Transverse colon (tissue), 4 donors: ENCODE measurements at regions of chr14 and their contacts with region 1.

Region 1: DNA sequence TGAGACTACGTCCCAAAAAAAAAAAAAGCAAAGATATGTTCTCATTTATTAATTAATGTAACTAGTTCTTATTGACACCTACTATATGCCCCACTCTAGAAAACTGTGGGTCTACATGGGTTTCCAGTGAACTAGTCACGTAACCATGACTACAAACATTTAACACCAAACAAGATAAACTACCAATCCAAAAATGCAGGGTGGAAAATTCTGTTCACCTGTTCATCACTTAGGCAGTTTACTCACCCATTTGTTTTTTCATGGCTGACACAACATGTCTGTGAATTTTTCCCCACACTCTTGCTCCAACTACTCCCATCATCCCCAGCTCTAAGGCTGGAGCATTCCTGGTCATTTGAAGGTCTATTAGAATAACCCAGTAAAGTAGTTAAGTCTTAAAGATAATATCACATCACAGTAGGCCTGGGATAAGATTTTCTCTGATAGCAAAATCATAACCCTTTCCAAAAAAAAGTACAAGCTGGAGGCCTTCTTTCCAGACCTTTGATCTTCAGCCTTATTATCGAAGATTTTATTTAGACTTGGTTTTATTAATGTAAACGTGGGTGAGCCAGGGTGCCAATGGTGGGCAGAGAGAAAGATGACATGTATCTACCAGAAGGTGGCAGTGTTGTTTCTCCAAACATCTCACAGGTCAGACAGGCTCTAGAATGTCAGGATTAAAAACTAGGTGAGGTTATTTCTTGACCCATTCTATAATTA is 61.6 kb upstream of the DAAM1 start:
- DNase-seq: no peak
- H3K4me3 ChIP-seq: no peak overlapping the region
- H3K27ac ChIP-seq: no peak overlapping the region
- H3K4me1 ChIP-seq: no peaks in the 10 kb centered on the region
- H3K27me3 ChIP-seq: no peaks in the 10 kb centered on the region
- CTCF ChIP-seq: peak; percentile 73 to 89 (median 84)
- EP300 ChIP-seq: no peak
- POLR2A ChIP-seq: no peak

Region 2: GRCh38 chr14:59081720-59082119 is 45.2 kb before region 1 on chr14:
- in situ Hi-C with region 1: no loop called
- intact Hi-C with region 1: no loop called
- DNase-seq: no peak
- H3K4me3 ChIP-seq: no peak overlapping the region
- H3K27ac ChIP-seq: no peak overlapping the region
- H3K4me1 ChIP-seq: no peaks in the 10 kb centered on the region
- H3K27me3 ChIP-seq: no peaks in the 10 kb centered on the region
- CTCF ChIP-seq: no peak
- EP300 ChIP-seq: no peak
- POLR2A ChIP-seq: no peak

Region 3: DNA sequence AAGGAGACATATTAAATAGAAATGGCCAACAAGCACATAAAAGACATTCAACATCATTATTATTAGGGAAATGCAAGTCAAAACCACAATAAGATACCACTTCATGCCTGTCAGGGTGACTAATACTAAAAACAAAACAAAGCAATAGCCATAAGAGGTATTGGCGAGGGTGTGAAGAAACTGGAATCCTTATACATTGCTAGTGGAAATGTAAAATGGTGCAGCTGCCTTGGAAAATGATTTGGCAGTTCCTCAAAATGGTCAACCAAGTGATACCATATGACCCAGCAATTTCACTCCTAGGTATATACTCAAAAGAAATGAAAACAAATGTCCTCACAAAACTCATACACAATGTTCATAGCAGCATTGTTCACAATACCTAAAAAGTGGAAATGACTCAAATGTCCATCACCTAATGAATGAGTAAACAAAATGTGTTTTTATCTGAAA is 311.4 kb after region 1 on chr14:
- in situ Hi-C with region 1: loop called (anchors 5 to 10 kb)
- intact Hi-C with region 1: loop called (anchors 5 kb)
- DNase-seq: no peak
- H3K4me3 ChIP-seq: no peak overlapping the region
- H3K27ac ChIP-seq: no peak overlapping the region
- H3K4me1 ChIP-seq: no peaks in the 10 kb centered on the region
- H3K27me3 ChIP-seq: no peaks in the 10 kb centered on the region
- CTCF ChIP-seq: no peak
- EP300 ChIP-seq: no peak
- POLR2A ChIP-seq: no peak

Region 4: GRCh38 chr14:59454131-59454530 is 327.3 kb after region 1 on chr14:
- in situ Hi-C with region 1: loop called in 1 of 4 experiments (anchors 10 kb)
- intact Hi-C with region 1: no loop called
- DNase-seq: no peak
- H3K4me3 ChIP-seq: no peak overlapping the region
- H3K27ac ChIP-seq: no peak overlapping the region
- H3K4me1 ChIP-seq: no peaks in the 10 kb centered on the region
- H3K27me3 ChIP-seq: no peaks in the 10 kb centered on the region
- CTCF ChIP-seq: no peak
- EP300 ChIP-seq: no peak
- POLR2A ChIP-seq: no peak

Region 5: GRCh38 chr14:59576332-59577294 is 449.7 kb after region 1 on chr14 and contains the start of gene CCDC175:
- in situ Hi-C with region 1: loop called in 2 of 4 experiments (anchors 10 to 25 kb)
- intact Hi-C with region 1: no loop called
- DNase-seq: peak; percentile 92
- H3K4me3 ChIP-seq: peak within 1 kb of the TSS; percentile 31 to 63 (median 46)
- H3K27ac ChIP-seq: peak within 1 kb of the TSS in 3 of 4 donors; percentile 25 to 27 (median 26)
- H3K4me1 ChIP-seq: peaks cover 0 to 11% (median 9%) of the 10 kb centered on the region in 4 donors
- H3K27me3 ChIP-seq: peaks cover 4% of the 10 kb centered on the region
- CTCF ChIP-seq: peak; percentile 63 to 88 (median 72)
- EP300 ChIP-seq: no peak
- POLR2A ChIP-seq: no peak
- total RNA-seq, gene CCDC175: 0.27 to 0.95 TPM in 2 of 4 donors, not detected in the others

Region 6: GRCh38 chr14:59583755-59584154 is 456.9 kb after region 1 on chr14:
- in situ Hi-C with region 1: loop called in 2 of 4 experiments (anchors 10 to 25 kb)
- intact Hi-C with region 1: no loop called
- DNase-seq: no peak
- H3K4me3 ChIP-seq: no peak overlapping the region
- H3K27ac ChIP-seq: no peak overlapping the region
- H3K4me1 ChIP-seq: peaks cover 0 to 4% (median 0%) of the 10 kb centered on the region in 4 donors
- H3K27me3 ChIP-seq: no peaks in the 10 kb centered on the region
- CTCF ChIP-seq: no peak
- EP300 ChIP-seq: no peak
- POLR2A ChIP-seq: no peak